Activated naive CD4-positive, alpha-beta T cell treated with anti-CD3 and anti-CD28 coated beads, Interleukin-2, amount 10 ng/mL, durations not matched to agents 7 days and 5 days (primary cell): ENCODE measurements at regions of chr10 and their contacts with region 1.

Region 1: GRCh38 chr10:99612167-99612831 is 7.9 kb downstream of the SLC25A28 start:
- DNase-seq: peak; percentile 34
- H3K4me3 Mint-ChIP-seq: no peak overlapping the region
- H3K27ac Mint-ChIP-seq: no peak overlapping the region
- H3K4me1 Mint-ChIP-seq: peaks cover 27% of the 10 kb centered on the region
- H3K27me3 Mint-ChIP-seq: no peaks in the 10 kb centered on the region

Region 2: GRCh38 chr10:99560277-99561126 is 51.8 kb before region 1 on chr10:
- CTCF ChIA-PET with region 1: interaction called, 40 read pairs
- DNase-seq: peak; percentile 57
- H3K4me3 Mint-ChIP-seq: no peak overlapping the region
- H3K27ac Mint-ChIP-seq: no peak overlapping the region
- H3K4me1 Mint-ChIP-seq: peaks cover 6% of the 10 kb centered on the region
- H3K27me3 Mint-ChIP-seq: peaks cover 43% of the 10 kb centered on the region

Region 3: DNA sequence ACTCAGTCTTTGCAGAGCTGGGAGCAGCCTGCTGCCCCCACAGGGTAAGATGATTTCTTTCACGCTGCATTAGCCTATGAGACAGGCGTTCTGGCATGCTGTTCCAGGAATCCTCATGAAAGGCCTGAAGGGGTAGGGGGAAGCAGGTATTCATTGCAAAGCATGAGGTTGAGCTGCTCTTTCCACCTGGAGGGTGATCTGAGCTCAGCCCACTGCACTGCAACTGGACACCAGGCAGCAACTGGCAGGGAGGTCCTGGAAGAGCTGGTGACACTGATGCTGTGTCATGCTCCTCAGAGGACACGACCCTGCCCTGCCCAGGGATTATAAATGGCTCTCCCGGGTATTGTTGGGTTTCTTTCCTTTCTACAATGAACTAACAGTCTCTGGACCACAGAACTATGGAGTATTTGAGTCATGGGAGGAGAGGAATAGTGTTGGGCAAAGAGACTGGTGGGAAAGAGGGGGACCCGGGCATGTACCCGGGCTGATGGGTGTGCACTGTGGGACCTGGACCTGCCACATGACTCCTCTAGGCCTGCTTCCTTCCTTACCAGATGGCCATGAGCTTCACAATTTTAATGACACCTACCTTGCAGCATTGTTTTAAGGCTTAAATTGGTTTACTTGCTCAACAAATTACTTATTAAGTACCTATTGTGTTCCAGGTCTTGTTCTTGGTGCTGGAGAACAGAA is 16.4 kb before region 1 on chr10:
- CTCF ChIA-PET with region 1: interaction called, 10 read pairs
- DNase-seq: no peak
- H3K4me3 Mint-ChIP-seq: no peak overlapping the region
- H3K27ac Mint-ChIP-seq: no peak overlapping the region
- H3K4me1 Mint-ChIP-seq: no peaks in the 10 kb centered on the region
- H3K27me3 Mint-ChIP-seq: peaks cover 23% of the 10 kb centered on the region